ENCODE measurements at regions of chr6 and their contacts with region 1.

Region 1: DNA sequence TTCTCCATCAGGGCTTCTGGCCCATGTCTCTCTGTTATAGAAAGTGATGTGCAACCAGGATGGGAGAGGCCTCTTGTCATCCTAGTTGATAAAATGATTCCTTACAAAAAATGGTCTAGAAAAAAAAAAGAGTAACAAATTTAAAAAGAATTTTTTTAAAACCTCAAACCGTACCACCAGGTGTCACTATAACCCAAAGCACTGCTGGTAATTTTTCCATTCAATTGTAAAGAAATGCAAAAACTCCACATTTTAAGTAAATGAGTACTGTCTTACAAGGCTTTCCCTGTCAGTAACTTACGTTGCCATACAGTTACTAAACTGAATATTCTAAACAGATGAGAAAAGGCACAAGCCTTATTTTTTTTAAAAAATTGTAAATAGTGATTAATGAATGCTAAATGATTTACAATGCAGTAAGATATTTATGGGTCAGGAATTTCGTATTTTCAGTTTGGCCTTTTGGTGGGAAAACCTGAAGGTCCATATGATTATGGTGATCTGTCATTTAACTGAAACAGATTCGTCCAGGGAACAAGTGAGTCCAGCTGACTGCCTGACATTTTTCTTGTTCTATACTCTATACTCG is 95.4 kb downstream of the OGFRL1 start:
- H3K4me3 Mint-ChIP-seq: no peak overlapping the region
- H3K27ac Mint-ChIP-seq: no peak overlapping the region
- H3K4me1 Mint-ChIP-seq: no peaks in the 10 kb centered on the region
- H3K27me3 Mint-ChIP-seq: peaks cover 3% of the 10 kb centered on the region

Region 2: DNA sequence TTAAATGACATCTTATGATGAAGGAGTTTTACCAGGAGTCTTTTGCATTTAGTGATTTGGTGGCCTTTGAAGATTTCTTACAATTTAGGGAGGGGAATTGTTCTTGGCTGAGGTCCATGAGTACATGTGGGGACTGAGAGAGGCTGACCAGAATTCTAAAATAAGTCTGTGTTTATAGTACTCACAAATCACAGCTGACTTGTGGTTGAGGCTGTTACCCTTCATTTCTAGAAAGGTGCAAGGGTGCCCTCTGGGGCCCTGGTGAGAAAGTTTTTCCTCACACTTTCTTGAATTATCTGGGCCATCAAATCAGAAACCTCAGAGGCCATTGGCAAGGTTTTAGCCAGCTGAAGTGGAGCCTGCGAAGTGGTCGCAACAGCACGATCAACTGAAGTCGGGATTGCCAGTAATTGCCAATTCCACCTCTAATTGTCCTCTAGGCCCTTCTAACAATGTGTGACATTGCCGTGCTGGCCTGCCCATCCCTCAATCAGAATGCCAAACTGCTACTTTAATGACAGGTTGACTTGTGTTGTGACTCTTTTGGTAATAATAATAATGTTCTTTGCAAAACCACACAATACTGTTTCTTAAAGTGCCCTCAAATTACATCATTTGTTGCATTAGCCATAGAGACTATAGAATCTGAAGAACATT is 126.2 kb after region 1 on chr6:
- intact Hi-C with region 1: loop called (anchors 1 kb)
- H3K4me3 Mint-ChIP-seq: no peak overlapping the region
- H3K27ac Mint-ChIP-seq: no peak overlapping the region
- H3K4me1 Mint-ChIP-seq: no peaks in the 10 kb centered on the region
- H3K27me3 Mint-ChIP-seq: peaks cover 6% of the 10 kb centered on the region

Region 3: DNA sequence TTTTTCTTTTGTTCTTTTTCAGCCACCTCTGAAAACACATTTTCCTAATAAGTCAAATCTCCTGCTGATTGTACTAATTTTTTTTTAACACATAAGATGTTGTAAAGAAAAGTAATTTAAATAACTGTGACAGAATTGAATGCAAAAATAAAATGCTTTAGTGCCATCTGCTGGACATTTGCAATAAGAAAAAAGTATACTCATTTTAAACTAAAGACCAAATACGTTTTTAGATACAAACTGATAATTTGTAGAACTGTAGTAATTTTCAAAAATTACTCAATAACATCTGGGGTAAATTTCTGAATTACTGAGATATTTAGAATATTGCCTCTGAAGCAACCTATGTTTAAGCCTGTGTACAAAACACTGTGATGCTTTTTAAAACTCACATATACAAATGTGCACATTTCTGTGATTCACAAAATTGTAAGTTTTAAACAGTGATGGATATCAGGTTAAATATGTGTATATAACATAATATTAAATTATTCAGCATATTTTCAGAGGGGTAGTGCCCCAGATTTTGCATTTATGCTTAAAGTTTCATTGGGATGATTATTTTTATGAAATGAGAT is 701.1 kb after region 1 on chr6:
- intact Hi-C with region 1: loop called (anchors 1 kb)
- H3K4me3 Mint-ChIP-seq: no peak overlapping the region
- H3K27ac Mint-ChIP-seq: no peak overlapping the region
- H3K4me1 Mint-ChIP-seq: no peaks in the 10 kb centered on the region
- H3K27me3 Mint-ChIP-seq: peaks cover 1% of the 10 kb centered on the region

Measured in dendritic cell treated with granulocyte-macrophage colony-stimulating factor and Interleukin-4, amounts not matched to agents 40 ng/mL and 50 ng/mL, for 4 days (primary cell).